ENCODE measurements at regions of chr5 and their contacts with region 1.

Region 1: GRCh38 chr5:111550279-111551020 is 38.1 kb upstream of the STARD4 start:
- DNase-seq: peak; percentile 80 to 91 (median 85)
- H3K4me3 ChIP-seq: no peak overlapping the region
- H3K27ac ChIP-seq: peak overlapping the region in 1 of 5 donors; percentile 31
- H3K4me1 ChIP-seq: no peaks in the 10 kb centered on the region
- H3K27me3 ChIP-seq: no peaks in the 10 kb centered on the region
- CTCF ChIP-seq: peak; percentile 59 to 83 (median 72)
- POLR2A ChIP-seq: no peak

Region 2: DNA sequence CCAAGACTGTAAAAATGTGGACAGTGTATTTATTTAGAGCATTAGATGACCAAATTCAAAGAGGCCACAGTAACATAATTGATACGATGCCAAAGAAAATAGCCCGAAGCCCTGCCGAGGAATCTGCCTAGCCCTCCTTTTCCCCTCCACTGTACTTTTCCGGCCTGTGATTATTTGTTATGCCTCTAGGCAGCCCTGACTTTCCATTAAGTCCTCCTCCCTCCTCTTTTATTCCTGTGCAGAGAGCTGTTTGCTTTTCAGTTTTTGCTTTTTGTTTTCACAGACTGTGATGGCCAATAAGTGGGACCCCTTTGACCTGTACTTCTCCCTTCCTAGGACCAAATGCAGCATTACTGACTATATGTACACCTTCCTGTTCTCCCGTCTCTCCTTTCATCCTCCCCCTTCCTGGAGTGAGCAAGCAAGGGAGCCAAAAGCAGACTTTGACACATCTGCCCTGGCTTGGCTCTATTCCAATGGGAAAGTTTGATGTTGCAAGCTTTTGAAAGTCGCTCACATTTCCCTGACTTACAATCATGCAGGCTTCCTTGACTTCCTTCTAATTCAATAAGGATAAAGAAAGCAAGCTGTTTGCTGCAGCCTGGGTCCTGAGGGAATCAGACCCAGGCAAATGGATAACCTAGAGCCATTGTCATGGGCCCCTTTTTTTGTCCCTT is 130.4 kb after region 1 on chr5:
- intact Hi-C with region 1: loop called in 1 of 2 experiments (anchors 10 kb)
- DNase-seq: peak; percentile 72 to 87 (median 80)
- H3K4me3 ChIP-seq: no peak overlapping the region
- H3K27ac ChIP-seq: peak overlapping the region in 3 of 5 donors; percentile 29 to 68 (median 38)
- H3K4me1 ChIP-seq: peaks cover 11 to 17% of the 10 kb centered on the region in 2 donors
- H3K27me3 ChIP-seq: no peaks in the 10 kb centered on the region
- CTCF ChIP-seq: peak in 2 of 6 experiments; percentile 21 to 29
- POLR2A ChIP-seq: no peak

Region 3: GRCh38 chr5:112146323-112147226 is 596.1 kb after region 1 on chr5:
- intact Hi-C with region 1: loop called (anchors 5 to 10 kb)
- DNase-seq: peak; percentile 51 to 84 (median 65)
- H3K4me3 ChIP-seq: no peak overlapping the region
- H3K27ac ChIP-seq: no peak overlapping the region
- H3K4me1 ChIP-seq: peaks cover 6 to 10% of the 10 kb centered on the region in 2 donors
- H3K27me3 ChIP-seq: no peaks in the 10 kb centered on the region
- CTCF ChIP-seq: peak; percentile 78 to 96 (median 91)
- POLR2A ChIP-seq: no peak